ENCODE measurements at regions of chr7 and their contacts with region 1.

Region 1: GRCh38 chr7:80078159-80078731 is 56.4 kb upstream of the GNAI1 start:
- DNase-seq: no peak
- H3K4me3 ChIP-seq: peak overlapping the region; percentile 9
- H3K27ac ChIP-seq: no peak overlapping the region
- H3K4me1 ChIP-seq: peaks cover 4% of the 10 kb centered on the region
- H3K27me3 ChIP-seq: no peaks in the 10 kb centered on the region
- CTCF ChIP-seq: no peak

Region 2: GRCh38 chr7:80172387-80172786 is 94.1 kb after region 1 on chr7:
- intact Hi-C with region 1: no loop called
- DNase-seq: no peak
- H3K4me3 ChIP-seq: no peak overlapping the region
- H3K27ac ChIP-seq: no peak overlapping the region
- H3K4me1 ChIP-seq: no peaks in the 10 kb centered on the region
- H3K27me3 ChIP-seq: no peaks in the 10 kb centered on the region
- CTCF ChIP-seq: no peak

Region 3: GRCh38 chr7:80288175-80289122 is 210.2 kb after region 1 on chr7:
- intact Hi-C with region 1: loop called (anchors 10 kb)
- DNase-seq: no peak
- H3K4me3 ChIP-seq: no peak overlapping the region
- H3K27ac ChIP-seq: no peak overlapping the region
- H3K4me1 ChIP-seq: no peaks in the 10 kb centered on the region
- H3K27me3 ChIP-seq: no peaks in the 10 kb centered on the region
- CTCF ChIP-seq: no peak